ENCODE measurements at regions of chr12 and their contacts with region 1.

Region 1: GRCh38 chr12:50825372-50825838 is 17.3 kb upstream of the TMPRSS12 start:
- DNase-seq: peak; percentile 4
- H3K4me3 ChIP-seq: no peak overlapping the region
- H3K27ac ChIP-seq: no peak overlapping the region
- H3K4me1 ChIP-seq: no peaks in the 10 kb centered on the region
- H3K27me3 ChIP-seq: no peaks in the 10 kb centered on the region
- CTCF ChIP-seq: peak in 3 of 4 experiments; percentile 56 to 80 (median 72)
- POLR2A ChIP-seq: no peak

Region 2: DNA sequence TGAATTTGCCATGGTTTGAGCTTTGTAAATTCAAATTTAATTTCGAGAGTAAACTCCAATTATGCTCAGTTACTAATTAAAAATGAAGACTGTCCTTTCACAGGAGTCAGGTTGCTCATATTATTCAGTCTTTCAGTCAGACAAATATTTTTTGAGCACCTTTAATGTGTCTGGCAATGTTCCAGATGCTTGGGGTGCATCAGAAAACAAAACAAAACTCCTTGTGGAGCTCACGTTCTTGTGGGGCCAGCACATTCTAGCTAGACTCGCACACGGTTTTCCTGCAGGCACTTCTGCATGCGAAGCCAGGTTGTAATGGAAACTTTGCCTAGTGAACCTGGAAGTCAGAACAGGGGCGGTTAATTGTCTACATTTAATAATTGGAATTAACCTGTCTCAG is 125.5 kb before region 1 on chr12:
- intact Hi-C with region 1: no loop called
- DNase-seq: no peak
- H3K4me3 ChIP-seq: no peak overlapping the region
- H3K27ac ChIP-seq: no peak overlapping the region
- H3K4me1 ChIP-seq: no peaks in the 10 kb centered on the region
- H3K27me3 ChIP-seq: no peaks in the 10 kb centered on the region
- CTCF ChIP-seq: no peak
- POLR2A ChIP-seq: no peak

Region 3: DNA sequence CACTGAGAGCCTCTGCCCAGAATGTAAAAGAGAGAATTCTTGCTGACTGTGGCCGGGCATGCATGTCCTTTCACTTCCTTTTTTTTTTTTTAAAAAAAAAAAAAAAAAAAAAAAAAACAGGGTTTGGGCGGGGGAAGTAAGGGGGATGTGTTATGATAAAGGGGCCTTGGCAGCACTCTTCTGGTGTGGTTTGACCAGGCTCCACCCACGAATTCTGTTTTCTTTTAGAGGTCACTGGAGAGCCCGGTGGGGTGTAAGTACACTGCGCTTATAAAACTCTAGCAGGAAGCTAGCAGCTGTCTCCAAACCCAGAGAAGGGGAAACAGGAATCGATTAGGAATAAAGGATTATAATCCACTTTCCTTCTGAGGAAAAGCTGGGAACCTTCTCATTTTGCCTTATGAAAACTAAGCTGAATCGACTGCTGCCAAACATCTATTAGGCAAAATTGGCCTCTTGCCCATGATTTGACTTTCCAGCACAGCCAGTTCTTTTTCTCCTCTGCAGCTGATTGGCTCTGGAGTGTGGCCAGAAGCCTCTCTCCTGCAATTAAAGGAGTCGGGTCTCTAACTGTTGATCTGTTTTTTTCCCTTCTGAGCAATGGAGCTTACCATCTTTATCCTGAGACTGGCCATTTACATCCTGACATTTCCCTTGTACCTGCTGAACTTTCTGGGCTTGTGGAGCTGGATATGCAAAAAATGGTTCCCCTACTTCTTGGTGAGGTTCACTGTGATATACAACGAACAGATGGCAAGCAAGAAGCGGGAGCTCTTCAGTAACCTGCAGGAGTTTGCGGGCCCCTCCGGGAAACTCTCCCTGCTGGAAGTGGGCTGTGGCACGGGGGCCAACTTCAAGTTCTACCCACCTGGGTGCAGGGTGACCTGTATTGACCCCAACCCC is 99.3 kb after region 1 on chr12:
- intact Hi-C with region 1: loop called (anchors 10 kb)
- DNase-seq: peak; percentile 96
- H3K4me3 ChIP-seq: peak overlapping the region; percentile 66 to 68
- H3K27ac ChIP-seq: peak overlapping the region; percentile 82 to 83
- H3K4me1 ChIP-seq: peaks cover 5% of the 10 kb centered on the region
- H3K27me3 ChIP-seq: no peaks in the 10 kb centered on the region
- CTCF ChIP-seq: no peak
- POLR2A ChIP-seq: peak; percentile 36

Region 4: GRCh38 chr12:50986966-50987737 is 161.7 kb after region 1 on chr12:
- intact Hi-C with region 1: loop called (anchors 1 kb)
- DNase-seq: peak; percentile 54
- H3K4me3 ChIP-seq: no peak overlapping the region
- H3K27ac ChIP-seq: peak overlapping the region in 1 of 2 donors; percentile 54
- H3K4me1 ChIP-seq: no peaks in the 10 kb centered on the region
- H3K27me3 ChIP-seq: no peaks in the 10 kb centered on the region
- CTCF ChIP-seq: peak in 2 of 4 experiments; percentile 52 to 60
- POLR2A ChIP-seq: no peak

Region 5: GRCh38 chr12:51083126-51083833 is 257.9 kb after region 1 on chr12 and contains the start of gene CSRNP2:
- intact Hi-C with region 1: loop called (anchors 2 kb)
- DNase-seq: peak; percentile 97
- H3K4me3 ChIP-seq: peak within 1 kb of the TSS; percentile 87 to 94
- H3K27ac ChIP-seq: peak within 1 kb of the TSS; percentile 84 to 90
- H3K4me1 ChIP-seq: no peaks in the 10 kb centered on the region
- H3K27me3 ChIP-seq: no peaks in the 10 kb centered on the region
- CTCF ChIP-seq: peak in 1 of 4 experiments; percentile 29
- POLR2A ChIP-seq: peak; percentile 98
- total RNA-seq, gene CSRNP2: 27.3 to 46.1 TPM

Region 6: GRCh38 chr12:51238510-51239334 is 413.3 kb after region 1 on chr12 and contains the start of gene DAZAP2:
- intact Hi-C with region 1: loop called (anchors 10 kb)
- DNase-seq: peak; percentile 97
- H3K4me3 ChIP-seq: peak within 1 kb of the TSS; percentile 98 to 100
- H3K27ac ChIP-seq: peak within 1 kb of the TSS; percentile 100
- H3K4me1 ChIP-seq: peaks cover 6% of the 10 kb centered on the region
- H3K27me3 ChIP-seq: no peaks in the 10 kb centered on the region
- CTCF ChIP-seq: peak; percentile 28 to 56 (median 36)
- POLR2A ChIP-seq: peak; percentile 88
- total RNA-seq, gene DAZAP2: 299 to 374 TPM

Region 7: GRCh38 chr12:51341259-51342007 is 516.0 kb after region 1 on chr12:
- intact Hi-C with region 1: loop called (anchors 10 kb)
- DNase-seq: peak; percentile 50
- H3K4me3 ChIP-seq: no peak overlapping the region
- H3K27ac ChIP-seq: no peak overlapping the region
- H3K4me1 ChIP-seq: no peaks in the 10 kb centered on the region
- H3K27me3 ChIP-seq: no peaks in the 10 kb centered on the region
- CTCF ChIP-seq: peak; percentile 83 to 94 (median 92)
- POLR2A ChIP-seq: no peak

Measured in prostate gland (tissue), 2 donors.